Cardiac septum (tissue), 1 donor: ENCODE measurements at regions of chr17 and their contacts with region 1.

Region 1: DNA sequence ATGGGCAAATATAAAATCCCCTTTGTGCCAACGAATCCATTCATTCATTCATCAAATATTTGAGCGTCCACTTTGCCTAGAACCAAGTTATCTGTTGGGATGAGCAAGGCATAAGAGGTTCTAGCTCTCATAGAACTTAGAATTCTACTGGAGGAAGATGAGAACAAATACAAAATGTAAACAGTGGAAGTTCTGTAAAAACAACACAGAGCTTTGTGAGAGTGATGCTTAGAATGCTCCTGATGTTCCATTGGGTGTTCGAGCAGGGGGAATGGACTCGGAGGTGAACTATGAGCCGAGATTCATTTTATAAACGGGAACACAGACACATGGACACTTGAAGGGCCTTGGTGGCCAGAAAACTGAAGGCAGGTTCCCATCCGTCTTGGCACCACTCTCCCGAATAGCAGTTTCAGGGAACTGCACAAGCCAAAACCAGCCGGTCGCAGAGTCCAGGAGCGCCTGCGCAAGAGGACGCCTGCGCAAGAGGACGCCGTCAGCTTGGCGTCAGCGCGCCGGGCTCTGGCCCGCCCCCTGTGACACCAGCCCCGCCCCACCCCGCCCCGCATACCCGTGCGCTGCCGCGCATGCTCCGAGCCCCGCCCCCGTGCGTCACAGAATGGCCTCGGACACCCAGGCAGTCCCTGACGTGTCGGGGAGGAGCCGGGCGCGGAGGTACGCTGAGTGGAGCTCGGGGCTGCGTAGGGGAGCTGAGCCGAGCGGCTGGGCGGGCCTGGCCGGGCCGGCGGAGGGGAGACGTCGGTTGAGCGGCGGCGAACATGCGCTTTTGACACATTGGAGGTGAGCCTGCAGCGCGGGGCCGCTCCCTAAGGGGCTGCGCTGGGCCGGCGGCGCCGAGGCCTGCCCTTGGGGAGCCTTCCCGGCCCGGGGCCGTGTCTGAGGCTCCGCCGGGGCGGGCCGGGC is at the start of gene NDEL1:
- DNase-seq: peak; percentile 100
- total RNA-seq, gene NDEL1: 42.0 TPM

Region 2: DNA sequence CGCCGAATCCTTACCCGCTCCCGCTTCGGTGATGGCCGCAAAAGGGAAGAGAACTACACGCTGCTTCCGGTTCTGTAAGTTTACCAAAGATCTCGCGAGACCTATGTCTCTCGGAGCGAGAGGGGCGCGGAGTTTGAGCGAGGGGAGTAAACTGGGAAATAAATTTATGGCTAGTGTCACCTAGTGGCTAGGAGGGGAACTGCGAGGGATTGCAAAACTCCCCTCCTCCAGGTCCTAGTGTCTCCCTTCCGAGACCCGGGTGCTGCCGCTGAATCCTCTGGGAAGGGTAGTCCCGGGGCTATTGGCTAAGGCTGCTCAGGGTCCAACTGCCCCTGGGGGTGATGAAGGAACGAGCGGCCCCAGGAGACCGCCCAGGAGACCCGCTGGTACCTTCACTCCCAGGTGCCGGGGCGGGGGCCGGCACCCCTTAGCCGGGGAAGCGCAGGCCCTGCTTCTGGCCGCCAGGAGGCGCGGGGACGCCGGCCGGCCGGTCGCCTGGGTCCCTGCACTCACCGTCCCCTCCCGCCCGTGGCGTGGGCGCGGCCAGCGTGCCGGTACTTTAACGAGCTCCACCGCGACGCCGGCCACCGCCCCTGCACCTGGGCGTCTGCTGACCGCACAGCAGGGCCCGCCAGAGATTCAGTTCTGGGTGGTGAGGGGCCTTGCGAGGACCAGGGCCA is 52.2 kb before region 1 on chr17 and contains the start of gene RPL26:
- intact Hi-C with region 1: loop called (anchors 5 kb)
- DNase-seq: peak; percentile 96
- total RNA-seq, gene RPL26: 727 TPM

Region 3: DNA sequence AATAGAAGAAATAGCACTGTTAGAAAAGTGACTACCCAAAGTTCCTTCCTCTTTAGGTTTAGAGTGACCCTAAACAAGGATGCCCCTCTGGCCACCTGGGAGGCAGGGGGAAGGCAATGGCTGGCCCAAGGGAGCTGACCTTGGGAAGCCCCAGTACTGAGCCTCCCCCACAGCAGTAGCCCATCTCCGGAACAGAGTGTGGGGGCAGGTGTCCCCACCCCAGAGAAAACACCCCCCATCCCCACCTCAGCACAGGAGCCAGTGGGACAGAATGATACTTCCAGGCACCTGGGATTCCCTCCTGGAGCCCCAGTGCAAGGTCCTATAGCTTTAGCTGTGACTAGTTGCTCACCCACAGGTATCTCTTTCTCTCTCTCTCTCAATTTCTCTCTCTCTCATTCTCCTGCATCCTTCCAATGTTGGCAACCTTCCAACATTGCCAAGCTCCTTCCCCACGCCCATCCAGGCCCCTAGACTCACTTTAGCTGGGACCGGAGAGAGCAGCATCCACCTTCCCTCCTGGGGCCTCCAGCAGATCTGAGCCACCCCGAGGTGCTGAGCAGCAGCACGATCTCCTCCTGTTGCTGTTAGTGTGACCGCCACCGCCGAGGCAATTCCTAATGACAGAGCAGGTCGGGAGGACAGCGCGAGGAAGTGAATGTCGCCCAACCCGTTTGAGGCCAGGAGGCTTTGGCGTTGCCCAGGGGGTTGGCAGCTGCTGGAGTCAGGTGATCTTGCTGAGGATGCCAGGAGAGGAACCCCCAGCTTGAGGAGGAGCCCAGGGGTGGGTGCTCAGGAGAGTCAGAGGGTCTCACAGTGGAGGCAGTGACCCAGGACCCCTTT is 38.1 kb before region 1 on chr17 and contains the start of gene RNF222:
- intact Hi-C with region 1: no loop called
- DNase-seq: no peak
- total RNA-seq, gene RNF222: not detected

Region 4: GRCh38 chr17:8409966-8410864 is 25.3 kb before region 1 on chr17:
- intact Hi-C with region 1: no loop called
- DNase-seq: peak; percentile 94

Region 5: DNA sequence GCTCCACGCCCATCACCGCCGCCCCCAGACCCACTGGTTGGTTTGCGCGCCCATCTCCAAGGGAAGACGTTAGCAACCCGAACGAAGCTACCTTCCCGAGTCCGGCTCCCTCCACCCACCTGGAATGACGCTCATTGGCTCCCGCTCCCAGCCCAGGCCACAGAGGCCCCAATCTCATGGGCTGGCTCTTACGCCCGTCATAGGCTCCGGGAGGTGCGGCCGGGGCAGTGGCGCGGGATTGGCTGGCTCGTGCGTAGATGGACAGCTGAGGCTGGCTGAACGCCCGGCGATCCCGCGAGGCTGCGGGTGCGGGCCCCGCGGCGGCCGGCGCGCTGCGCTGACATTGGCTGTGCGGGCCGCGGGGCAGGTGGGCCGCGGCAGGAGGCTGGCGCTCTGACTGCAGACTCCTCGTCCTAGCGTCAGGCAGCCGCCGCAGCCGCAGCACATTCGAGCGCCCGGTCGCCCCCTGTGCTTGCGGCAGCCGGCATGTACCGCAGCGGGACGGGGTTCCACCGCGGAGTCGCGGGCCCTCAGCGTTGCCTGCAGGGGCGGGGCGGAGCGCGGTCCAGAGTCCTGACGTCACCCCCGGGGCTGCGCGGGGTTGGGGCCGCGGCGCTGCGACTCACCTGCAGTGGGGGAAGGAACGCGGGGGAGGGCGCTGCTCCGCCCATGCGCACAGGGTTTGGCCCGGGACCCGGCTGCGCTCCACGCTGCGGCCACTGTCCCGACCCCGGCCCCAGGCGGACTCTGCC is 195.5 kb after region 1 on chr17:
- intact Hi-C with region 1: loop called (anchors 5 kb)
- DNase-seq: peak; percentile 99